ENCODE measurements at regions of chr3 and their contacts with region 1.

Region 1: DNA sequence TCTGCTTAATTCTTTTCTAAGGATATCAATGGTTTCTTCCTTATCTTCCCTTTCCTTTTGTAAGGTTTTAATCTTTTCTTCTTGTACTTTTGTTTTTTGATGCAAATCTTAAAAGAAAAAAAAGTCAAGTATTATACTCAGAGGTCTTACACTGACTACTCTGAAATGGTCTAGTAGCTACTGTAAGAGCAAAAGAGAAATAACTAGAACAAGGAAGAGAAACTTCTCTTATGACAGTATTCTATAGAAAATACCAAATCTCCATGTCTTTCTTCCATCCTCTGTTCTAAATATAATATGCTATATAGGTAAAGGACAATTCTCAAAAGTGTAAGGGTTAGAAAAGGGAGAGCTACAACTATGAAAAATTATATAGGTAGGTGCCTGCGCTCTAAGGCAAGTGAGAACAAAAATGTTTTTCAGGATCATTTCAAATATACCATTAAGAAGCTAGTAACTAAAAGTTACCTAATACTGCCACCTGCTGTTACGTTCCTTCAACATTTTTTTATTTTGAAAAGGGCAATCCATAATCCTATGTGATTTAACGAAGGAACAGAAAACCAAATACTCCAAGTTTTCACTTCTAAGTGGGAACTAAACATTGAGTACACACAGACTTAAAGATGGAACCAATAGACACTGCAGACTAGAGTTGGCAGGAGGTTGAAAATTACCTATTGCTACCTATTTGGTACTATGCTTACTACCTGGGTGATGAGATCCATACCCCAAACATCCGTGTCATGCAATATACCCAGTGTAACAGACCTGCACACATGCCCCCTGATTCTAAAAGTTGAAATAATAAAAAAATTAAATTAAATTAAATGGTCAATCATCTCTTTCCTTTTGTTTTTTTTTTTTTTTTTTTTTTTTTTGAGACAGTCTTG is 36.7 kb downstream of the CIP2A start:
- DNase-seq: no peak
- H3K4me3 ChIP-seq: no peak overlapping the region
- H3K27ac ChIP-seq: no peak overlapping the region
- H3K4me1 ChIP-seq: no peaks in the 10 kb centered on the region
- H3K27me3 ChIP-seq: no peaks in the 10 kb centered on the region
- CTCF ChIP-seq: peak in 2 of 3 experiments; percentile 13 to 15; a peak in 2 of 4 replicates
- EP300 ChIP-seq: no peak
- POLR2A ChIP-seq: no peak
- RAD21 ChIP-seq: peak in 1 of 2 experiments; percentile 46; a peak in 3 of 4 replicates

Region 2: DNA sequence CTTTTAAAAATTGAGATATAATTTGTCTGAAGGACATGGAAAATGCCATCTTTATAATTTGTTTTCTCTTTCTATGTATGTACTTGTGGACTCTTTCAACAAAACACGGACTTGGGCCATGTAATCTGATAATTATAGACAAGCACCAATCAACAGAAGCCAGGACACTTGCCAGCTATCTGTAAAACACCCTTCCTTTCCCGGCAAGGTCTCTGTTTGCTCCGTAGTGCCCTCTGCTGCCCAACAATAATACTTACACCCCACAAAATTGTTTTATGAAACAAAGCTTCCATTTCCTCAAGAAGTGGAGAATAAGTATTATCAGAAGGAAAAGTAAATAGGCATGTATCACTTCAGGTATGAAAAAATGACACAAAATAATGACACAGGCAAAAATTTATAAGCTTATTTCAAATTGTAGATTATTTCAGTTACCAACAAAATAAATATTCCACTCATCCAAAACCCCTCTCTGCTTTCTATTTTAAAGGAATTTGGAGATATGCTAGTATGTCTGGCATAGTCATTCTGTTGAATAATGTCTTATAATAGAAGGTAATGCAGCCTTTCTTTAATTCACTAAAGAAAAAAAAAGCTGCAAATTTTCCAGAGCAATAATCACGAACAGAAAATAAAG is 74.9 kb before region 1 on chr3:
- CTCF ChIA-PET with region 1: interaction called, 11 read pairs
- POLR2A ChIA-PET with region 1: no interaction called
- DNase-seq: peak in 1 of 2 experiments; percentile 66
- H3K4me3 ChIP-seq: no peak overlapping the region
- H3K27ac ChIP-seq: no peak overlapping the region
- H3K4me1 ChIP-seq: 0 out of 7 replicates have a peak, but pooled peaks cover 0 to 2% (median 0%) of the 10 kb centered on the region in 4 experiments
- H3K27me3 ChIP-seq: no peaks in the 10 kb centered on the region
- CTCF ChIP-seq: peak; percentile 22 to 69 (median 64)
- EP300 ChIP-seq: no peak
- POLR2A ChIP-seq: no peak
- RAD21 ChIP-seq: peak; percentile 80 to 84

Region 3: DNA sequence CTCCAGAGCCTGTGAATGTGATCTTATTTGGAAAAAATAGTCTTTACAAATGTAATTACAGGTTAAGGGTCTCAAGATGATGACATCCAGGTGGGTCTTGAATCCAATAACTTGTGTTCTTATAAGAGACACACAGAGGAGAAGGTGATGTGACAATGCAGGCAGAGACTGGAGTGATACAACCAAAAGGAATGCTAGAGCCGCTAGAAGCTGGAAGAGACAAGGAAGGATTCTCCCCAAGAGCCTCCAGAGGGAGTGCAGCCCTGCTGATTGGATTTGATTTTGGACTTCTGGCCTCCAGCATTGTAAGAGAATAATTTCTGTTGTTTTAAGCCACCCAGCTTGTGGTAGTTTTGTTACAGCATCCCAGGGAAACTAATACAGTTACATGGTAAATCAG is 51.8 kb before region 1 on chr3:
- CTCF ChIA-PET with region 1: interaction called, 91 read pairs
- POLR2A ChIA-PET with region 1: no interaction called
- DNase-seq: no peak
- H3K4me3 ChIP-seq: no peak overlapping the region
- H3K27ac ChIP-seq: no peak overlapping the region
- H3K4me1 ChIP-seq: no peaks in the 10 kb centered on the region
- H3K27me3 ChIP-seq: no peaks in the 10 kb centered on the region
- CTCF ChIP-seq: no peak
- EP300 ChIP-seq: no peak
- POLR2A ChIP-seq: no peak
- RAD21 ChIP-seq: no peak

Region 4: GRCh38 chr3:108518895-108519294 is 33.6 kb before region 1 on chr3:
- CTCF ChIA-PET with region 1: interaction called, 17 read pairs
- POLR2A ChIA-PET with region 1: no interaction called
- DNase-seq: no peak
- H3K4me3 ChIP-seq: no peak overlapping the region
- H3K27ac ChIP-seq: no peak overlapping the region
- H3K4me1 ChIP-seq: no peaks in the 10 kb centered on the region
- H3K27me3 ChIP-seq: no peaks in the 10 kb centered on the region
- CTCF ChIP-seq: no peak
- EP300 ChIP-seq: no peak
- POLR2A ChIP-seq: no peak
- RAD21 ChIP-seq: no peak

Region 5: GRCh38 chr3:108538083-108538482 is 14.4 kb before region 1 on chr3:
- CTCF ChIA-PET with region 1: interaction called, 24 read pairs
- POLR2A ChIA-PET with region 1: interaction called, 5 read pairs
- DNase-seq: no peak
- H3K4me3 ChIP-seq: no peak overlapping the region
- H3K27ac ChIP-seq: no peak overlapping the region
- H3K4me1 ChIP-seq: peaks cover 0 to 7% (median 0%) of the 10 kb centered on the region in 4 experiments; a peak in 2 of 7 replicates
- H3K27me3 ChIP-seq: no peaks in the 10 kb centered on the region
- CTCF ChIP-seq: no peak
- EP300 ChIP-seq: no peak
- POLR2A ChIP-seq: no peak
- RAD21 ChIP-seq: no peak

Measured in H1 (cell line).